Posterior cingulate gyrus (tissue), 11 donors: ENCODE measurements at regions of chr4 and their contacts with region 1.

Region 1: GRCh38 chr4:781493-782216 is 44.3 kb downstream of the CPLX1 start:
- DNase-seq: peak; percentile 95 to 100 (median 99)

Region 2: DNA sequence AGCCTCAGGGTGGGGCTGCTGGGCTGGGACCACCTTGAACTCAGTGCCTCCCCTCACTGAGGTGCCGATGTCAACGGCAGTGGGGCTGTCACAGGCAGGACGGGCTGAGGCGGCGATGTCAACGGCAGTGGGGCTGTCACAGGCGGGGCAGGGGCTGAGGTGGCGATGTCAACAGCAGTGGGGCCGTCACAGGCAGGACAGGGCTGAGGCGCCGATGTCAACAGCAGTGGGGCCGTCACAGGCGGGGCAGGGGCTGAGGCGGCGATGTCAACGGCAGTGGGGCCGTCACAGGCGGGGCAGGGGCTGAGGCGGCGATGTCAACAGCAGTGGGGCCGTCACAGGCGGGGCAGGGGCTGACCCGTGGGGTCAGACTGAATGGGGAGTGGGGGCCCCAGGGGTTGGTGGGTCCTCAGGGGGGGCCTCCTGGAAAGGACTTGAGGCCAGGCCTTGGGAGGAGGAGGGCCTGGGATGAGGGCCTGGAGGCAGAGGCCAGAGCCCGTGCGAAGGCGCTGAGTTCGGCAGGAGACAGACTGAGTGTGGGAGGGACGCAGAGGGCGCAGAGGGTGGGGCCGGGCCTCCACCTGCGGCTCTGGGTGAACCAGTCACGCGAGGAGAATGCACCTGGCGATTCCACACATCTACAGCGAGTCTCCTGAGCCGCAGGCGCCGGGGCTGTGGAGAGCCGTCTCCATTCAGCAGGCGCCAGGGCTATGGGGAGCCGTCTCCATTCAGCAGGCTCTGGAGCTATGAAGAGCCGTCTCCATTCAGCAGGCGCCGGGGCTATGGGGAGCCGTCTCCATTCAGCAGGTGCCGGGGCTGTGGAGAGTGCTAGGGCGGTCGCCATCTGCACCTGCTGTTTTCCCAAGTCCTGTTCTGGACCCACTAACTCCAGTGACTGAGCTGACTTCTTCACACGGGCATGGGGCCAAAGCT is 130.4 kb before region 1 on chr4:
- intact Hi-C with region 1: no loop called
- DNase-seq: peak; percentile 53 to 96 (median 77)

Region 3: GRCh38 chr4:931960-932712 is 150.5 kb after region 1 on chr4 and contains the starts of genes GAK and TMEM175:
- intact Hi-C with region 1: loop called (anchors 5 kb)
- DNase-seq: peak; percentile 87 to 99 (median 92)